HCT116 (cell line): ENCODE measurements at regions of chr14 and their contacts with region 1.

Region 1: DNA sequence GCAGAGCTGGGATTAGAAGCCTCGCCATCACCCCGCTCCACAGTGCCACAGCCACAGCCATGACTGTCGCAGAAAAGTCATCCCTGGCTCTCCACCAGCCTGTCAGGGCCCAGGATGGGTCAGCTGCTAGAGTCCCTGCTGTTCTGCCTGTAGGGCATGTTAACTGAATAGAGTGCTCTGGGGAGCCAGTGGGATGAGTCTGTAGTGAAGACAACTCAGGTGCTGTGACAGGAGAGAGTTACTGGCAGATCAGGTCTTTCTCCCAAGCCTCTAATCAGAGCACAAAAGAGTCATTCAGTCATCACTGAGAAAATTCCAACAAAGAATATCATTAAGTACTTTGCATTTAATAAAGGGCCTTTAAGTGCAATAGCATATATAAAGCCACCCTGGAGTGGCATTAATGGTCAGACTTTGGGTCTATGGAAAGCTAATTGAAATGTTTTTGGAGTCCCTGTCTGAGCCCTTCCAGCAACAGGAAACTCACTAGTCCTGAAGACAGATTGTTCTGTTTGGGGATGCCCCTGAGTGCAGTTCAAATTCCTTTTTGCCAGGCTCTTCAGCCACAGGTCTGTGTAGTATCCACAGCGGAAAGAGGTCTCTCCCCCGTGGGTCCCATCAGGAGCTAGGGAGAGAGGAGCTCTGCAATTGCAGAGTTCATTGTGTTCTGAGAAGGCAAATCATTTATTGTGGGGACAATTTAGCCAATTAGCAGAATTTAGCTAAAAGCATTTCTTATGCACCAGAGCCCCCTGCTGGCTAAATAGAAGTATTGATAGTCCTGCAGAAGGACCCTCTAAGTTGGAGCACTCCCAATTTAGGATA is 45.2 kb upstream of the C14orf132 start:
- DNase-seq: peak; percentile 43
- ATAC-seq: peak; percentile 71
- H3K4me3 ChIP-seq: no peak overlapping the region
- H3K27ac ChIP-seq: no peak overlapping the region
- H3K4me1 ChIP-seq: no peaks in the 10 kb centered on the region
- H3K27me3 ChIP-seq: peaks cover 16% of the 10 kb centered on the region
- CTCF ChIP-seq: peak; percentile 64 to 91 (median 83)
- POLR2A ChIP-seq: no peak
- RAD21 ChIP-seq: peak; percentile 87

Region 2: DNA sequence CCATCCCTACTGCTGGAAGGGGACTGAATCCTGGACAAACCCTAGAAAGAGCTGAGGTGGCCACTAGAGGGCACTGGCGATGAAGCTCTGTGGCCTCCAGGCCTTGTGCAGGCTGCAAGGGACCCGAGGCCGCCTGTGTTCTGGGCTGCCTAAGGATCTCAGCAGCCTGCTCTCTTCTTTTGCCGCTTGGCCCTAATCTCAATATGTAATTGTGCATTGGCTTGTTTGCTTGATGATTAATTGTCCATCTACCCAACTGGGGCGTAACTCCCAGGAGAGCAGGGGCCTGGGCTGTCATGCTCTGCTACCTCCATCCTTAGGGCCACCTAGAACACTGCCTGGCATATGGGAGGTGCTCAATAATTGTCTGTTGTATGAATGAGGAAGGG is 551.4 kb before region 1 on chr14:
- CTCF ChIA-PET with region 1: interaction called, 6 read pairs
- POLR2A ChIA-PET with region 1: no interaction called
- RAD21 ChIA-PET with region 1: interaction called in 1 of 2 experiments, 3 read pairs
- intact Hi-C with region 1: loop called (anchors 2 kb)
- DNase-seq: peak; percentile 49
- ATAC-seq: peak; percentile 99
- H3K4me3 ChIP-seq: no peak overlapping the region
- H3K27ac ChIP-seq: no peak overlapping the region
- H3K4me1 ChIP-seq: peaks cover 0 to 7% of the 10 kb centered on the region in 2 experiments; a peak in 1 of 4 replicates
- H3K27me3 ChIP-seq: no peaks in the 10 kb centered on the region
- CTCF ChIP-seq: peak; percentile 85 to 91 (median 91)
- POLR2A ChIP-seq: no peak
- RAD21 ChIP-seq: peak; percentile 94

Region 3: DNA sequence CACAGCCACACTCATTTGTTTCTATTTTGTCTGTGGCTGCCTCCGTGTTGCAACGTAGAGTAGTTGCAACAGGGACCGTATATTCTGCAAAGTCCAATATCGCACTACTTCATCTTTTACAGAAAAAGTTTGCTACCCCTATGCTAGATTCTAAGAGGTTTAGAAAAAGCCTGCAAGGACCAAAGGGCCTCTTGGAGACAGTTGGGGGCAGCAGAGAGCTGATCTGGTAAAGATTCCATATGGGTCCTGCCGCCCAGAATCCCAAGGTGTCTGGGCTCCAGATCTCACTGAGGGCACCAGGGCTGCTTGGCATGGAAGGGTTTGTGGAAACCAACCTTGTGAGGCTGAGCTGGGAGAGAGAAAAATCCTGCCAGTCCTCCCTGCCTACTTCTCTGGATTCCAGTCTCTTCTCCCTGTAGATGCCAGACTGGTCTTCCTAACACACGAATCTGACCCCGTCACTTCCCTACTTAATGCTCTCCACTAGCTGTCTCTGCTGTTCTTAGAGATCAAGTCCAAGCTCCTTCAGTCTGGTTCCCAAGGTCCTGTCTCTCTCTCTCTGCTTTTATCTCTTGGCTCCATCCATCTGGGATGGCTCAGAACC is 384.5 kb before region 1 on chr14:
- CTCF ChIA-PET with region 1: no interaction called
- POLR2A ChIA-PET with region 1: no interaction called
- RAD21 ChIA-PET with region 1: no interaction called
- intact Hi-C with region 1: loop called (anchors 1 kb)
- DNase-seq: peak; percentile 42
- ATAC-seq: peak; percentile 89
- H3K4me3 ChIP-seq: no peak overlapping the region
- H3K27ac ChIP-seq: no peak overlapping the region
- H3K4me1 ChIP-seq: no peaks in the 10 kb centered on the region
- H3K27me3 ChIP-seq: peaks cover 80% of the 10 kb centered on the region
- CTCF ChIP-seq: peak; percentile 46 to 75 (median 68); a peak in 5 of 6 replicates
- POLR2A ChIP-seq: no peak
- RAD21 ChIP-seq: peak; percentile 60

Region 4: DNA sequence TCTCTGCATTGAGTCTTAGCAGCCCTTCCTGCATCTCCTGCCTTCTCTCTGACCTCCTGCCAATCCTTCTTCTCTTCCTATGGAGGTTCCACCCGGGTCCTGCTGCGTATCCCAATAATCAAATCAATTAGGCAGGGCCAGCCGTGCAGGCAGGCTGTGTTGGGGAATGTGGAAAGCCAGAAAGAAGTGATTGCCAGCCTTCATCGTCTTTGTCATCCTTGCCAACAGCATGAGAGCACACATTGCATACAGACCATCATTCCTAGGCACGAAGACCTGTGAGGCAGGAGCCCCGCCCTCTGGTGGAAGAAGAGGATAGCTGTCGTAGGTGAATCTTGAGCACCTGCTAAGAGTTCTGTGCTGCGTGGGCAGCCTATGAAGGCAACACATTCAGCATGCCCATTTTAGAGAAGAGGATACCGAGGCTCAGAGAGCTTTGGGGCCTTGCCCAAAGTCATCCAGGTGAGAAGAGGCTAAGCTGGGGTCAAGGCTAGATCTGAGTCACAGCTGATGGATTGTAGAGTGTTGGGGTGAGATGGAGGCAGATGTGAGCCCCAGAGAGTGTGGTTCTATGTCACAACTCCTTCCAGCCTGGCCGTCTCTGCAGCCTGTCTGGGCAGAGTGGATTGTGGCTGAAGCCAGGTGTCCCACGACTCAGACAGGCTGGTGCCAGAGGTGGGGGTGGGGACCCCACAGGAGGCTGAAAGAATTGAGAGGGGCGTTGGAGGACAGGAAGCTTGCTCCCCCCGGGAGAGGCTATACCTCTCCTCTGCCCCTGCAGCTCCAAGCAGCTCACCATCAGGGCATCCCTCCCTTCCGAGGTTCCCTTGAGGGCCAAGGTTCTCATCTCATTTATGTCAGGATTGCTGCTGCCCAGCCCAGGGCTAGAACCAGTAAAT is 57.9 kb after region 1 on chr14:
- CTCF ChIA-PET with region 1: interaction called, 12 read pairs
- POLR2A ChIA-PET with region 1: no interaction called
- RAD21 ChIA-PET with region 1: no interaction called
- intact Hi-C with region 1: loop called (anchors 1 kb)
- DNase-seq: peak; percentile 12
- ATAC-seq: peak; percentile 85
- H3K4me3 ChIP-seq: no peak overlapping the region
- H3K27ac ChIP-seq: no peak overlapping the region
- H3K4me1 ChIP-seq: no peaks in the 10 kb centered on the region
- H3K27me3 ChIP-seq: no peaks in the 10 kb centered on the region
- CTCF ChIP-seq: peak; percentile 31 to 72 (median 70); a peak in 4 of 6 replicates
- POLR2A ChIP-seq: no peak
- RAD21 ChIP-seq: peak; percentile 50

Region 5: DNA sequence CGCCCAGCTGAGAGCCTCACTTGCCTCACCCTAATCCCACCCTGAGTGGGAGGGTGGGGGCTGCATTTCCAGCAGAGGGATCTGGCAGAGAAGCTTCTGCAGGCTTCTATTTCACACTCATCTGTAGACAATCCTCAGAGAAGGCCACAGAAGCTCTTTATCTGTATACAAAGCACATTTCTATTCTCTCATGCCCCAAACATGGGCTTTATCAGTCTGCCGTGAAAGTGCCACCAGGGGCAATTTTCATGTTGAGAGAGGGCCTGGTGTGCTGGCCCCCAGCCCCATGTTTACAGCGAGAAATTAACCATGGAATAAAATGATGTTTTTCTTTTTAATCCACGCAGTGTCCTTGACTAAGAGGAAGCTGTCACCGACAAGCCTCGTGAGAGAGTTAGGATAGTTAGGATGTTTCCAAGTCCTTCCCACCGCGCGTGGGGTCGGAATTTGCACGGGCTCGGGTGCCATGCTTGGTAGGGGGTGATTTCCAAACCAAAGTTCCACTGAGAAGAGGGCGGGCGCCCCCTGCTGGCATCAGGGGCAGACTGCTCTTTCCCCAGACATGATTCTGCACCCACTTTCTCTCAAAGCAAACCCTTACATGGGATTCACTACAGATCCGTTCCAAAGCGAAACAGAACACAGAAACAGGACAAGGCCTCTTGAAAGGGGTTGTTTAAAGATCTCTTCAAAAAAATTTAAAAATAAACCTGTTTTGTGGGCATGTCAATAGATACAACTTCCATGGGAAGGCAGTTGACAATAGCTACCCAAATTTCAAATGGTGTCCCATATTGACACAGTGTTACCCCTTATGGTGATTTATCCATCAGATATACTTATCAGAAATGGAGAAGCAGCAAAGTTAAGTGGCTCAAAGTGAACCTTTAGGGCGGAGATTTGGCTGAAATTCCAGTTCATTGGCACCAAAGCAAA is 281.5 kb after region 1 on chr14:
- CTCF ChIA-PET with region 1: interaction called, 7 read pairs
- POLR2A ChIA-PET with region 1: no interaction called
- RAD21 ChIA-PET with region 1: no interaction called
- intact Hi-C with region 1: loop called (anchors 2 kb)
- DNase-seq: peak; percentile 29
- ATAC-seq: peak; percentile 88
- H3K4me3 ChIP-seq: no peak overlapping the region
- H3K27ac ChIP-seq: no peak overlapping the region
- H3K4me1 ChIP-seq: no peaks in the 10 kb centered on the region
- H3K27me3 ChIP-seq: no peaks in the 10 kb centered on the region
- CTCF ChIP-seq: peak; percentile 92 to 95 (median 95)
- POLR2A ChIP-seq: no peak
- RAD21 ChIP-seq: peak; percentile 91